H1 (cell line): ENCODE measurements at regions of chr9 and their contacts with region 1.

Region 1: DNA sequence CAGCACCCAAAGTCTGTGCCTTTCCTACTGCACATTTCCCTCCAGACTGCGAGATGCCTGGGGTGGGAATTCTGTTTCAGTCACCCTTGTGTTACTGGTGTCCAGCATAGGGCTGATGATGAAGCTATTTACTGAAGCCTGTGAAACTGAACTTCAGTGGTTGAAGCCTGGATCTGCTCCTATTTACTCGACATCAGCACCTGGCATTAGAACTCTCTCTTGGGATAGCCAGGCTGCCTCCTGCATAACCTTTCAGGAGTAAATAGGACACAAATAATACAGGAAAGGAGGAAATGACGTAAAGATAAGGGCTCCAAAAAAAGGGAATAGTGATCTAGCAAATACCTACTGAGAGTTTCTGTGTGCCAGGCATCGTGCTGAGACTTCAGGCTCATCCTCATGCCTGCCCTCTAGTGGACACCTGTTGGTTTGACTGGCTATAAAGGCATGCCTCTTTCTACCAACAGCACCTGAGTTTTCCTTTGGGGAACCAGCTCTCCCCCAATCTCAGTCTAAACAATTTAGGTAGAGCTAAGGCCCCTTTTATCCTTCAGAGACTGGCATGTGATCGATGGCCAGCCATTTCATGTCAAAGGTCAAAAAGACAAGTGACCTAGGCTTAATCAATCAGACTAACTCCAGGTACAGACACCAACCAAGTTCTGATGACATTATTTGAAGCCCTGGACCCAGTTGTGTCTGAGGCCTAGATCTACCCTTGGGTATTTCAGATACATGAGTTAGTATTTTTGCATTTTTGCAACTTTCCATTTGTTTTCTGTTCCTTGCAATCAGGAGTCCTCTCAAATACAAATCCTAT is 192.1 kb upstream of the TRIM32 start:
- DNase-seq: peak in 1 of 2 experiments; percentile 74
- H3K4me3 ChIP-seq: no peak overlapping the region
- H3K27ac ChIP-seq: no peak overlapping the region
- H3K4me1 ChIP-seq: peaks cover 0 to 4% (median 3%) of the 10 kb centered on the region in 4 experiments; a peak in 2 of 7 replicates
- H3K27me3 ChIP-seq: no peaks in the 10 kb centered on the region
- CTCF ChIP-seq: peak; percentile 75 to 92 (median 76)
- EP300 ChIP-seq: no peak
- POLR2A ChIP-seq: no peak
- RAD21 ChIP-seq: peak; percentile 77 to 78

Region 2: DNA sequence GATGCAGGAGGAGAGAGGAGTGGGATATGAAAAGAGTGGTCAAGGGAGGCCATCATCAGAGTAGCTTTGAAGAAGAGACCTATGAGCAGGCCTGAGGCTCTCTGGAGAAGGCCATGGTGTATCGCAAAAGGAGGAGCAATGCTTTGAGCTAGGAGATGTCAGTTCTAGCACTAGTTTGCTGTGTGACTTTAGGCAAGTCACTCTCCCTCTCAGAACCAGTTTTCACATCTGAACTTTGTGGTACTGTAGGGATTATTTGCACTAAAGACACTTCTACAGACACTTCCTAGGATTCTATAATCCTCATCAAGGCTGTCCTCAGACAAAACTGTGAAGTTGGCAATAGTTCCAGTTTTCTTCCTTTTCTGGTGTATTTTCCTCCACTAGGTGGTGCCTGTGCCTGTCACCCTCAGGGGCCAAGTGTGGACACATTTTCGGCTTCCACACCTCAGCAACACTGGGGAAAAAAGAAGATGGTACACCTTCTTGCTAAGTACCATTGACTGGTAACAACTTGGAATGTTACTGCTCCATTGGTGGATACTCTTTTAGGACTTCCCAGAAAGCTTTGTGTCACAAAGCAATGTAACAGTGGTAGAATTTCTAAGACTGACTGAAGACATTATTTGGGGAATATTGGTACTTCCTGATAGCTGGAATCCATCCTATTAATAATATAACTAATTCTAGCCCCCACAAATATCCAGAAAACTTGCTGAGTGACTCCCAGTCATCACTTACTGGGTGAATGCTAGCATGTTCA is 331.6 kb before region 1 on chr9:
- CTCF ChIA-PET with region 1: interaction called, 12 read pairs
- POLR2A ChIA-PET with region 1: no interaction called
- DNase-seq: no peak
- H3K4me3 ChIP-seq: no peak overlapping the region
- H3K27ac ChIP-seq: no peak overlapping the region
- H3K4me1 ChIP-seq: no peaks in the 10 kb centered on the region
- H3K27me3 ChIP-seq: peaks cover 0 to 4% (median 1%) of the 10 kb centered on the region in 4 experiments; a peak in 3 of 7 replicates
- CTCF ChIP-seq: peak; percentile 52 to 69 (median 61)
- EP300 ChIP-seq: no peak
- POLR2A ChIP-seq: no peak
- RAD21 ChIP-seq: peak; percentile 77 to 82

Region 3: GRCh38 chr9:116391306-116392029 is 103.6 kb before region 1 on chr9:
- CTCF ChIA-PET with region 1: interaction called, 10 read pairs
- POLR2A ChIA-PET with region 1: no interaction called
- DNase-seq: no peak
- H3K4me3 ChIP-seq: no peak overlapping the region
- H3K27ac ChIP-seq: no peak overlapping the region
- H3K4me1 ChIP-seq: no peaks in the 10 kb centered on the region; a peak in 1 of 7 replicates
- H3K27me3 ChIP-seq: no peaks in the 10 kb centered on the region
- CTCF ChIP-seq: no peak
- EP300 ChIP-seq: no peak
- POLR2A ChIP-seq: no peak
- RAD21 ChIP-seq: no peak

Region 4: DNA sequence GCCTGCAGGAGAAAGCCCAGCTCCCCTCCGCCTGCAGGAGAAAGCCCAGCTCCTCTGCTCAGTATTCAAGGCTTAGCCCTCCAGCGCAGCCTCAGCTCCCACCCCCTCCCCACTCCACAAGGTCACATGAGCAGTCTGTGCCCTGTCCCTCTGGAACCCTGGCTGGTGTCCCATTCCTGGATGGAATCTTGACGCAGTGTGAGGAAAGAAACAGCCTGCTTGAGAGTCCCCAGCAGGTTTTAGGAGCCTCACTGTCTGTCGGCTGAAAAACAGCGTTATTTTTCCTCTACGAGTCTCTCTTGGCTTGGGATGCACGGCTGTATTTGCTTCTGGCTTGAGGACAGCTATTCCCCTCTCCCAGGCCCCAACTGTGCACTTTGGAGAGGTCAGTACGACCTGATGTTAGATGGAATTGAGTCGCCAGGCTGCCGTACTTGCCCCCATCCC is 18.1 kb before region 1 on chr9:
- CTCF ChIA-PET with region 1: interaction called, 51 read pairs
- POLR2A ChIA-PET with region 1: interaction called, 4 read pairs
- DNase-seq: peak in 1 of 2 experiments; percentile 43
- H3K4me3 ChIP-seq: no peak overlapping the region
- H3K27ac ChIP-seq: no peak overlapping the region
- H3K4me1 ChIP-seq: peaks cover 4 to 14% (median 9%) of the 10 kb centered on the region in 4 experiments
- H3K27me3 ChIP-seq: no peaks in the 10 kb centered on the region
- CTCF ChIP-seq: no peak
- EP300 ChIP-seq: no peak
- POLR2A ChIP-seq: no peak
- RAD21 ChIP-seq: no peak

Region 5: GRCh38 chr9:116482740-116483139 is 12.3 kb before region 1 on chr9:
- CTCF ChIA-PET with region 1: interaction called, 51 read pairs
- POLR2A ChIA-PET with region 1: no interaction called
- DNase-seq: peak in 1 of 2 experiments; percentile 47
- H3K4me3 ChIP-seq: no peak overlapping the region
- H3K27ac ChIP-seq: no peak overlapping the region
- H3K4me1 ChIP-seq: peaks cover 0 to 6% (median 2%) of the 10 kb centered on the region in 4 experiments; a peak in 3 of 7 replicates
- H3K27me3 ChIP-seq: no peaks in the 10 kb centered on the region
- CTCF ChIP-seq: no peak
- EP300 ChIP-seq: no peak
- POLR2A ChIP-seq: no peak
- RAD21 ChIP-seq: no peak

Region 6: GRCh38 chr9:116572095-116572748 is 77.2 kb after region 1 on chr9:
- CTCF ChIA-PET with region 1: interaction called, 26 read pairs
- POLR2A ChIA-PET with region 1: no interaction called
- DNase-seq: peak; percentile 46 to 91
- H3K4me3 ChIP-seq: no peak overlapping the region
- H3K27ac ChIP-seq: no peak overlapping the region
- H3K4me1 ChIP-seq: peaks cover 0 to 3% (median under 1%) of the 10 kb centered on the region in 4 experiments; a peak in 3 of 7 replicates
- H3K27me3 ChIP-seq: no peaks in the 10 kb centered on the region
- CTCF ChIP-seq: peak; percentile 92 to 96 (median 95)
- EP300 ChIP-seq: no peak
- POLR2A ChIP-seq: no peak
- RAD21 ChIP-seq: peak; percentile 99 to 100